ENCODE measurements at regions of chr12 and their contacts with region 1.

Region 1: DNA sequence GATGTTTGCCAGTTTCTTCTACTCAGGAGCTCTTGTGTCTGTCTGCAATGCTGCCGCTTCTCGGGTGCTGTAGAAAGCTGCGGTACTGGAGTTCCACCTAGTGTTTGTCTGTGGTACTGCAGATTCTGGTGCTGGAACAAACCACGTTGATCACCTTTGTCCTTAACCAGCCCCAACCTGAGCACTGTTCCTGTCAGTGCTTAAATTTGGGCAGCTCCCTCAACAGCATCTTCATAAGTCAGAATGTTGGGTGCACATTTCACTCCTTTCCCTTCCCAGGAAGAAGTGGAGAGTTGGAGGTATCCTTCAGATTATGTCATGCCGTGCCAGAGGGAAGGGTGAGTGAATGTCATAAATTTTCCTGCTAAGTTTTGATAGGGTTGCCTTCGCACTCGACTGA is 48.7 kb upstream of the LALBA start:
- DNase-seq: peak; percentile 26 to 68
- ATAC-seq: peak in 6 of 8 donors; percentile 56 to 83 (median 72)
- H3K4me3 ChIP-seq: no peak overlapping the region
- H3K27ac ChIP-seq: no peak overlapping the region
- H3K4me1 ChIP-seq: no peaks in the 10 kb centered on the region
- H3K27me3 ChIP-seq: peaks cover 0 to 35% (median 11%) of the 10 kb centered on the region in 7 donors
- CTCF ChIP-seq: peak; percentile 90 to 98 (median 96)

Region 2: GRCh38 chr12:48084066-48084465 is 534.5 kb before region 1 on chr12:
- intact Hi-C with region 1: loop called in 1 of 10 experiments (anchors 5 kb)
- DNase-seq: no peak
- ATAC-seq: peak in 3 of 8 donors; percentile 26 to 54 (median 51)
- H3K4me3 ChIP-seq: no peak overlapping the region
- H3K27ac ChIP-seq: no peak overlapping the region
- H3K4me1 ChIP-seq: peaks cover 0 to 1% (median 0%) of the 10 kb centered on the region in 9 donors
- H3K27me3 ChIP-seq: no peaks in the 10 kb centered on the region
- CTCF ChIP-seq: peak in 7 of 9 donors; percentile 25 to 64 (median 53)

Region 3: GRCh38 chr12:48197971-48198671 is 420.4 kb before region 1 on chr12:
- intact Hi-C with region 1: loop called in 1 of 10 experiments (anchors 10 kb)
- DNase-seq: peak; percentile 97 to 98
- ATAC-seq: peak; percentile 98 to 100 (median 100)
- H3K4me3 ChIP-seq: peak overlapping the region; percentile 38 to 97 (median 75)
- H3K27ac ChIP-seq: peak overlapping the region; percentile 89 to 100 (median 100)
- H3K4me1 ChIP-seq: peaks cover 0 to 36% (median 23%) of the 10 kb centered on the region in 9 donors
- H3K27me3 ChIP-seq: peaks cover 0 to 3% (median 0%) of the 10 kb centered on the region in 7 donors
- CTCF ChIP-seq: no peak

Region 4: GRCh38 chr12:48247181-48247966 is 371.2 kb before region 1 on chr12:
- intact Hi-C with region 1: loop called in 3 of 10 experiments (anchors 5 to 10 kb)
- DNase-seq: no peak
- ATAC-seq: no peak
- H3K4me3 ChIP-seq: no peak overlapping the region
- H3K27ac ChIP-seq: no peak overlapping the region
- H3K4me1 ChIP-seq: no peaks in the 10 kb centered on the region
- H3K27me3 ChIP-seq: peaks cover 0 to 6% (median 0%) of the 10 kb centered on the region in 7 donors
- CTCF ChIP-seq: no peak

Region 5: DNA sequence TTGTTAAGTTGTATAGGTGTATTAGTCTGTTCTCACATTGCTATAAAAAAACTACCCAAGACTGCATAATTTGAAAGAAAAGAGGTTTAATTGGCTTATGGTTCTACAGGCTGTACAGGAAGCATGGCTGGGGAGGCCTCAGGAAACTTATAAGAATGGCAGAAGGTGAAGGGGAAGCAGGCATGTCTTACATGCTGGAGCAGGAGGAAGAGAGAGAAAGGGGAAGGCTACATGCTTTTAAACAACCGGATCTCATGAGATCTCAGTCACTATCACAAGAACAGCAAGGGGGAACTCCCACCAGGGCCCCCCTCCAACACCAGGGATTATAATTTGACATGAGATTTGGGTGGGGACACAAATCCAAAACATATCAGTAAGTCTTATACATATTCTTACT is 354.9 kb before region 1 on chr12:
- intact Hi-C with region 1: loop called in 1 of 10 experiments (anchors 10 kb)
- DNase-seq: no peak
- ATAC-seq: no peak
- H3K4me3 ChIP-seq: no peak overlapping the region
- H3K27ac ChIP-seq: no peak overlapping the region
- H3K4me1 ChIP-seq: no peaks in the 10 kb centered on the region
- H3K27me3 ChIP-seq: peaks cover 0 to 5% (median 0%) of the 10 kb centered on the region in 7 donors
- CTCF ChIP-seq: no peak

Region 6: DNA sequence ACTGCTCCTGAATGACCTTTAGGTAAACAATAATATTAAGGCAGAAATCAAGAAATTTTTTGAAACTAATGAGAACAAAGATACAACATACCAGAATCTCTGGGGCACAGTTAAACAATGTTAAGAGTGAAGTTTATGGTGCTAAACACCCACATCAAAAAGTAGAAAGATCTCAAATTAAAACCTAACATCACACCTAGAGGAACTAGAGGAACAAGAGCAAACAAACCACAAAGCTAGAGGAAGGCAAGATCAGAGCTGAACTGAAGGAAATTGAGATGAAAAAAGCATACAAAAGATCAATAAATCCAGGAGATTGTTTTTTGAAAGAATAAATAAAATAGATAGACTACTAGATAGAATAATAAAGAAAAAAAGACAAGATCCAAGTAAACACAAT is 85.9 kb before region 1 on chr12:
- intact Hi-C with region 1: loop called in 1 of 10 experiments (anchors 10 kb)
- DNase-seq: no peak
- ATAC-seq: no peak
- H3K4me3 ChIP-seq: no peak overlapping the region
- H3K27ac ChIP-seq: no peak overlapping the region
- H3K4me1 ChIP-seq: no peaks in the 10 kb centered on the region
- H3K27me3 ChIP-seq: no peaks in the 10 kb centered on the region
- CTCF ChIP-seq: no peak

Region 7: GRCh38 chr12:48542300-48542928 is 76.1 kb before region 1 on chr12:
- intact Hi-C with region 1: loop called in 3 of 10 experiments (anchors 5 to 10 kb)
- DNase-seq: peak; percentile 13 to 19
- ATAC-seq: no peak
- H3K4me3 ChIP-seq: no peak overlapping the region
- H3K27ac ChIP-seq: no peak overlapping the region
- H3K4me1 ChIP-seq: no peaks in the 10 kb centered on the region
- H3K27me3 ChIP-seq: peaks cover 0 to 9% (median 3%) of the 10 kb centered on the region in 7 donors
- CTCF ChIP-seq: peak in 7 of 9 donors; percentile 15 to 62 (median 47)

Region 8: GRCh38 chr12:48659863-48660262 is 41.3 kb after region 1 on chr12:
- intact Hi-C with region 1: no loop called
- DNase-seq: no peak
- ATAC-seq: no peak
- H3K4me3 ChIP-seq: no peak overlapping the region
- H3K27ac ChIP-seq: no peak overlapping the region
- H3K4me1 ChIP-seq: no peaks in the 10 kb centered on the region
- H3K27me3 ChIP-seq: no peaks in the 10 kb centered on the region
- CTCF ChIP-seq: no peak

Region 9: DNA sequence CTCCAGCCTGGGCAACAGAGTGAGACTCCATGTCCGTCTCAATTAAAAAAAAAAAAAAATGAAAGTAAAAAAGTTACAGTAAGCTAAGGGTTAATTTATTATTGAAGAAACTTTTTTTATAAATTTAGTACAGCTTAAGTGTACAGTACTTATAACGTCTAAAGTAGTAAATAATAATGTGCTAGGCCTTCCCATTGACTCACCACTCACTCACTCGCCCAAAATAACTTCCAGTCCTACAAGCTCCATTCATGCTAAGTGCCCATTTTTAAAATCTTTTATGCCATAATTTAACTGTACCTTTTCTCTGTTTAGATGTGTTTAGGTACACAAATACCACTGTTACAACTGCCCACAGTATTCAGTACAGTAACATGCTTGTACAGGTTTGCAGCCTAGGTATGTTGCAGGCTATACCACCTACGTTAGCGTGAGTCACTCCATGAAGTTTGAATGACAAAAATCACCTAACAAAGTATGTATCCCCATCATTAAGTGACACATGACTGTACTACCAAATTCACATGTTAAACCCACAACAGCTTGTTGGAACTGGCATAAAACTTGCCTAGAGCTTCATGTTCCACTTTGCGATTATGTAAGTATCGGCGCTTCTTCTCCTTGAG is 52.8 kb after region 1 on chr12:
- intact Hi-C with region 1: no loop called
- DNase-seq: no peak
- ATAC-seq: peak in 2 of 8 donors; percentile 67 to 79
- H3K4me3 ChIP-seq: no peak overlapping the region
- H3K27ac ChIP-seq: no peak overlapping the region
- H3K4me1 ChIP-seq: peaks cover 0 to 31% (median 8%) of the 10 kb centered on the region in 9 donors
- H3K27me3 ChIP-seq: no peaks in the 10 kb centered on the region
- CTCF ChIP-seq: no peak

Measured in heart right ventricle (tissue), 16 donors.